MCF 10A (cell line): ENCODE measurements at regions of chr17 and their contacts with region 1.

Region 1: GRCh38 chr17:63537991-63538692 is 12.1 kb upstream of the DCAF7 start:
- DNase-seq: no peak
- H3K4me3 Mint-ChIP-seq: no peak overlapping the region
- H3K27ac Mint-ChIP-seq: no peak overlapping the region
- H3K4me1 Mint-ChIP-seq: no peaks in the 10 kb centered on the region
- H3K27me3 Mint-ChIP-seq: peaks cover 17% of the 10 kb centered on the region
- CTCF ChIP-seq: no peak

Region 2: DNA sequence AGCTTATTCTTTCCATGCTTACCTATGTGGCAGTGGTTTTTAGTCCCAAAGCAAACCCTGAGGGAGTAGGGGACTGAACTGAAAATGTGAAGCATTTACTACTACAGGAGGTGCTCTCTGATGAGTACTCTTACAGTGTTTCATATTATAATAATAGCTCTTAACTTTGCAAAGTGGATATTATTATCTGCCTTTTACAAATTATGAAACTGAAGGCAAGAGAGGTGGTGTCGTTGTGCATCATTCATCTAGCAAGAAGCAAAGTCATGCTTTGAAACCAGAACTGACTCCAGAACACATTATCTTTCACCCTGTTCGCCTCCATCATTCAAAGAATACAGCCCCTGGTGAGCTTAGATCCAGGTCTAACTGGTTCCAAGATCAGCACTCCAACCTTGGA is 23.2 kb before region 1 on chr17:
- CTCF ChIA-PET with region 1: no interaction called
- POLR2A ChIA-PET with region 1: no interaction called
- intact Hi-C with region 1: loop called (anchors 1 kb)
- DNase-seq: no peak
- H3K4me3 Mint-ChIP-seq: no peak overlapping the region
- H3K27ac Mint-ChIP-seq: no peak overlapping the region
- H3K4me1 Mint-ChIP-seq: no peaks in the 10 kb centered on the region
- H3K27me3 Mint-ChIP-seq: peaks cover 37% of the 10 kb centered on the region
- CTCF ChIP-seq: no peak